ENCODE measurements at regions of chr17 and their contacts with region 1.

Region 1: DNA sequence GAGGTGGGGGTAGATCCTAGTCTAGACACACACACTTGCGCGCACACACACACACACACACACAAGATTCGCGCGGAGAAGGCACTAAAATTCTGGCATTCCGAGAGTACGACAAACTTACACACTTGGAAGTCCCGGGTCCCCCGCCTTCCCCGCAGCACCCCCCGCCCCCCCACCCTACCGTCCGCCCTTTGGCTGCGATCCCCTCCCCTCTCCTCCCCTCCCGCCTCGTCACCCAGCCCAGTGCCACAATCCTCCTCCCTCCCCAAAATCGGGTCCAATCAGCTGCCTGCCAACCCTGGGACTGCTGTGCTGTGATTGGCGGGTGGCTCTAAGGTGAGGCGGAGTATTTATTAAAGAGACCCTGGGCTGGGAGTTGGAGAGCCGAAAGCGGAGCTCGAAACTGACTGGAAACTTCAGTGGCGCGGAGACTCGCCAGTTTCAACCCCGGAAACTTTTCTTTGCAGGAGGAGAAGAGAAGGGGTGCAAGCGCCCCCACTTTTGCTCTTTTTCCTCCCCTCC is at the start of gene SOX9:
- DNase-seq: peak; percentile 95
- H3K4me3 ChIP-seq: peak within 1 kb of the TSS; percentile 82 to 99
- H3K27ac ChIP-seq: peak within 1 kb of the TSS; percentile 60 to 90
- H3K4me1 ChIP-seq: peaks cover 16 to 29% of the 10 kb centered on the region in 2 experiments; a peak in 3 of 4 replicates
- H3K27me3 ChIP-seq: no peaks in the 10 kb centered on the region
- CTCF ChIP-seq: no peak
- EP300 ChIP-seq: peak in 1 of 2 experiments; percentile 26; a peak in 1 of 4 replicates
- RAD21 ChIP-seq: no peak
- polyA plus RNA-seq, gene SOX9: 20.2 and 35.3 TPM in 2 replicates

Region 2: GRCh38 chr17:72222621-72223380 is 102.1 kb after region 1 on chr17:
- CTCF ChIA-PET with region 1: no interaction called
- POLR2A ChIA-PET with region 1: no interaction called
- DNase-seq: no peak
- H3K4me3 ChIP-seq: no peak overlapping the region
- H3K27ac ChIP-seq: no peak overlapping the region
- H3K4me1 ChIP-seq: peaks cover 0 to 10% of the 10 kb centered on the region in 2 experiments; a peak in 1 of 4 replicates
- H3K27me3 ChIP-seq: peaks cover 12% of the 10 kb centered on the region; the same call in 1 of the 2 replicates
- CTCF ChIP-seq: no peak
- EP300 ChIP-seq: no peak
- RAD21 ChIP-seq: no peak

Region 3: GRCh38 chr17:72430611-72431432 is 310.1 kb after region 1 on chr17:
- CTCF ChIA-PET with region 1: interaction called, 23 read pairs
- POLR2A ChIA-PET with region 1: no interaction called
- DNase-seq: no peak
- H3K4me3 ChIP-seq: no peak overlapping the region
- H3K27ac ChIP-seq: no peak overlapping the region
- H3K4me1 ChIP-seq: peaks cover 16 to 31% of the 10 kb centered on the region in 2 experiments; a peak in 2 of 4 replicates
- H3K27me3 ChIP-seq: no peaks in the 10 kb centered on the region
- CTCF ChIP-seq: peak; percentile 49
- EP300 ChIP-seq: no peak
- RAD21 ChIP-seq: peak; percentile 45